ENCODE measurements at regions of chr1 and their contacts with region 1.

Region 1: DNA sequence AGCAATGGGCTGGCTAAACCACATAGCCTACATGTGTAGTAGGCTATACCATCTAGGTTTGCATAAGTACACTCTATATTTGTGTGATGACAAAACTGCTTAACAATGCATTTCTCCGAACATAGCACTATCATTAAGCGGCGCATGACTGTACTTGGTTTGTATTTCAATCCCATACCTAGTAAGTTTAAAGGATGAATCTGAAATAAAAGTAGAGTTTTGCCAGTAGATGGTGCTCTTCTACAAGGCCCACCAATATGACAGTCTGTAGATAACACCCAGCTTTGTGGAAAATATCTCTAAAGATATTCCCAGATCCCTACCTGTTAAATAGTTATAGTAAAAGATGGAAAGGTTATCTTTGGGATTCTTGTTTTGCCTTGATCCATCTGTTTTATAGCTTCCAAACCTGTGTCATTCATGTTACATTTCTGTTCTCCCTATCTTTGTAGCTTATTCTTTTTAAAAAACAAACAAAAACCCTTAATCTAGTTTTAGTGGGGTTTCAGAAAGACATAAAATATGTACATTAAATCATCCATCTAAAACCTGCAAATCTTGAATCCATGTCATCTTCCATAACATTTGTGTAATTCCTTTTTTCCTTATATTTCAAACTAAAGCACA is 33.9 kb upstream of the ASPM start:
- DNase-seq: no peak
- ATAC-seq: no peak
- H3K4me3 ChIP-seq: no peak overlapping the region
- H3K27ac ChIP-seq: no peak overlapping the region
- H3K4me1 ChIP-seq: no peaks in the 10 kb centered on the region
- H3K27me3 ChIP-seq: no peaks in the 10 kb centered on the region

Region 2: DNA sequence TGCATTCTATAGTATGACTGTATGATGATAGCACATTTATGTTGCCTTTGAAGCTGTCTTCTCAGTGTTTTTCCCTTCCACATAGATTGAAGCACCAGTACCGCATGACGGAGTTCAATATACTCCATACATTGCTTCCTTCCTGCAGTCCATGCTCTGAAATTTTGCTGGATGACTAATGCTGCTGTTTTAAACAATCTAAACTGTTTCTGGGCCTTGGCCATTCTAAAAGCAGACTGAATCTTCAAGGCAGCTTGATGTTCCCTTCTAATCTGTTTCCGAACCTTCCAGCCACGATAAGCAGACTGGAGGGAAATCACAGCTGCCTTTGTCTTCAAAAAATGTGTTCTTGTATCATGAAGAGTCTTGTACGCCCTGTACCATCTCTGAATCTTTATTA is 77.1 kb before region 1 on chr1:
- intact Hi-C with region 1: no loop called
- DNase-seq: no peak
- ATAC-seq: no peak
- H3K4me3 ChIP-seq: no peak overlapping the region
- H3K27ac ChIP-seq: no peak overlapping the region
- H3K4me1 ChIP-seq: no peaks in the 10 kb centered on the region
- H3K27me3 ChIP-seq: no peaks in the 10 kb centered on the region

Region 3: GRCh38 chr1:197339106-197340060 is 159.0 kb after region 1 on chr1:
- intact Hi-C with region 1: loop called in 1 of 2 experiments (anchors 10 kb)
- DNase-seq: no peak
- ATAC-seq: no peak
- H3K4me3 ChIP-seq: no peak overlapping the region
- H3K27ac ChIP-seq: no peak overlapping the region
- H3K4me1 ChIP-seq: peaks cover 0 to 2% of the 10 kb centered on the region in 2 donors
- H3K27me3 ChIP-seq: no peaks in the 10 kb centered on the region

Region 4: DNA sequence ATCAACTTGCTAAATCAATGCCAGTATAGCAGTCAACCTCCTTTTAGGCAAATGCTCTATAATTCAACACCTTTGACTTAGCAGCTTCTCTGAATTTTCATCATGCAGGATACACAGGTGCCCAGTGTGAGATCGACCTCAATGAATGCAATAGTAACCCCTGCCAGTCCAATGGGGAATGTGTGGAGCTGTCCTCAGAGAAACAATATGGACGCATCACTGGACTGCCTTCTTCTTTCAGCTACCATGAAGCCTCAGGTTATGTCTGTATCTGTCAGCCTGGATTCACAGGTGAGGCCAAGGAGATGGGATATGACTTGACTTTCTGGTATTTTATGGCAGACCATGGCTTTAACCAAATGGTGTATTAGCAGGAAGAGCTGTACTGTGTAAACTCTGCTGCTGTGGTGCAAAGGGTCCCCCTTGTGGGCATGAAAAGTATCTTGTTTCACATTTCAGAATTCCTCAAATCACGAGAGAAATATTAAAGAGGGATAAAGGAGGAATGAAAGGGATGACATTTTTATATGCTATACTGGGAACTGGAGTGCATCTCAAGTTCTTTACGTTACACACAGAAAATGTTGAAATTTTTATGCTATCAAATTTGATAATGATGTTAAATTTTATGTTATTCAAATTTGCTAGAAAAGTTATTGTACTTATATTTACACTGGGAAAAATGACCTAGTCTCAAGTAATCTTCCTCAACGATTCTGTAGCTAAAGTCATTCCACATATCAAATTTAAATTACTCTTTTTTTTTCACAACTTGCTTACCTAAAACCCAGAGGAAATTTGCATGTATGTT is 176.6 kb after region 1 on chr1:
- intact Hi-C with region 1: loop called in 1 of 2 experiments (anchors 10 kb)
- DNase-seq: no peak
- ATAC-seq: peak; percentile 66
- H3K4me3 ChIP-seq: no peak overlapping the region
- H3K27ac ChIP-seq: no peak overlapping the region
- H3K4me1 ChIP-seq: no peaks in the 10 kb centered on the region
- H3K27me3 ChIP-seq: no peaks in the 10 kb centered on the region

Region 5: DNA sequence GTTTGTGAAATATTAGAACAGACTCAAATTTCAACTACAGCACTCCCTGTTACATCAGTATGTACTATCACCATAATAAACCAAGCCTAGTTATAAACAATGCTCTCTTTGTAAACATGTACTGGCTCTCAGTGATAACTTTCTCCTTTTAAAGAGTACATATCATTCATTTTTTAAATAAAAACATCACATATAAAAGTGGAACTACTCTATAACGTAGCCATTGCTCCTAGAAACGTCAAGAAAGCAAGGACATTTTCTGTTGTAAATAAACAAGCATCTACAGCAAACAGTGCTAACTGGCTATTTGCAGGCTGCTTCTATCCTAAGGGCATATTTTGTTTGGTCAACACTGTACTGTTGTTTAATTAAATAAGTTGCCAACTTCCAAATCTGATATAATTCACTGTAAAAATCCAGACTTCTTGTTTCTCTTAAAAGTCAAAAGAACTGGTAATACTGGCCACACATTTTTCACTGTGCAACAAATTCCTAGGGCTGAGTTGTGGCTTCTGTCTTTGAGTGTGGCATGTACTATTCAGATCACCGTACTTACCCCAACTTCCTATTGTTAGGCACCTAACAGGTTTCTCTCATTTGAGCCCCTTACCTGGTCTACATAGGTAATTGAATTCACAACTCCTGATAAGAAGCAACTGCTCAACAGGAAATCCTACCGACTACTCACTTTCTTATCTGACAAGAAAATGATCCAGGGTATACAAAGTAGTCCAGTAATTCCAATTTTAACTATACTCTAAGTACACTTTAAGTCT is 483.0 kb after region 1 on chr1:
- intact Hi-C with region 1: no loop called
- DNase-seq: no peak
- ATAC-seq: no peak
- H3K4me3 ChIP-seq: no peak overlapping the region
- H3K27ac ChIP-seq: no peak overlapping the region
- H3K4me1 ChIP-seq: no peaks in the 10 kb centered on the region
- H3K27me3 ChIP-seq: no peaks in the 10 kb centered on the region

Measured in aorta (tissue), 5 donors.